ENCODE measurements at regions of chr4 and their contacts with region 1.

Region 1: GRCh38 chr4:186067757-186068385 is 1.1 kb upstream of the TLR3 start:
- DNase-seq: peak; percentile 31
- H3K4me3 ChIP-seq: no peak overlapping the region; a peak in 1 of 4 replicates
- H3K27ac ChIP-seq: no peak overlapping the region
- H3K4me1 ChIP-seq: peaks cover 2 to 6% of the 10 kb centered on the region in 2 experiments; a peak in 2 of 4 replicates
- H3K27me3 ChIP-seq: no peaks in the 10 kb centered on the region
- CTCF ChIP-seq: peak; percentile 28; the same call in 1 of the 2 replicates
- EP300 ChIP-seq: no peak
- RAD21 ChIP-seq: peak; percentile 63

Region 2: DNA sequence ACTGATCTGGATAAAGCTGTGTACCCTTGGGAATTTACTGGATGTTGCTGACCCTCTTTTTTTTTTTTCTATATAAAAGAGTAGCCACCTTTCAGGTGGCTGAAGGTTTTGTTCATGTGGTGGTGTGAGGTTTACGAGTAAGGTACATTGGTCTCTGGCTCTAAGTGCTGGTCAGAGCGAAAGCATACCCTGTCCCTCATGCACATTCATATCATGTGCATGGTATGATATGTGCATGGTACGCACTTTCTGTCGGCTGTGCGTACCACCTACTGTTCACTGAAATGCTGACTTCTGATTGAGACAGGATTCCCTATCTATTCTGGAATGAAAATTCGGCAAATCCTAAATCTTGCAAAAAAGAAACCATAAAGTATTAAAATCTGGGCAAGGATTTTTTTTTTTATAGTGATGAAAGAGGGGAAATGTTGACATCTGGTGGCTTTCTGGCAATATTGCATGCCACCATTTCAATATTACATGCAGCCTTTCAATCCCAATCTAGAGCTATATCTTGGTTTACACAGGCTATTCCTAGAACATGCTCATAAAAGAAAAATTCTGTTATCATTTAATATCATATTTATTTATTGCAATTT is 69.4 kb after region 1 on chr4:
- CTCF ChIA-PET with region 1: interaction called, 28 read pairs
- POLR2A ChIA-PET with region 1: no interaction called
- DNase-seq: peak; percentile 55
- H3K4me3 ChIP-seq: no peak overlapping the region
- H3K27ac ChIP-seq: no peak overlapping the region
- H3K4me1 ChIP-seq: peaks cover 0 to 2% of the 10 kb centered on the region in 2 experiments; a peak in 1 of 4 replicates
- H3K27me3 ChIP-seq: no peaks in the 10 kb centered on the region; the same call in 1 of the 2 replicates
- CTCF ChIP-seq: peak; percentile 72
- EP300 ChIP-seq: no peak
- RAD21 ChIP-seq: peak; percentile 79

Measured in SK-N-SH (cell line).